ENCODE measurements at regions of chr13 and their contacts with region 1.

Region 1: DNA sequence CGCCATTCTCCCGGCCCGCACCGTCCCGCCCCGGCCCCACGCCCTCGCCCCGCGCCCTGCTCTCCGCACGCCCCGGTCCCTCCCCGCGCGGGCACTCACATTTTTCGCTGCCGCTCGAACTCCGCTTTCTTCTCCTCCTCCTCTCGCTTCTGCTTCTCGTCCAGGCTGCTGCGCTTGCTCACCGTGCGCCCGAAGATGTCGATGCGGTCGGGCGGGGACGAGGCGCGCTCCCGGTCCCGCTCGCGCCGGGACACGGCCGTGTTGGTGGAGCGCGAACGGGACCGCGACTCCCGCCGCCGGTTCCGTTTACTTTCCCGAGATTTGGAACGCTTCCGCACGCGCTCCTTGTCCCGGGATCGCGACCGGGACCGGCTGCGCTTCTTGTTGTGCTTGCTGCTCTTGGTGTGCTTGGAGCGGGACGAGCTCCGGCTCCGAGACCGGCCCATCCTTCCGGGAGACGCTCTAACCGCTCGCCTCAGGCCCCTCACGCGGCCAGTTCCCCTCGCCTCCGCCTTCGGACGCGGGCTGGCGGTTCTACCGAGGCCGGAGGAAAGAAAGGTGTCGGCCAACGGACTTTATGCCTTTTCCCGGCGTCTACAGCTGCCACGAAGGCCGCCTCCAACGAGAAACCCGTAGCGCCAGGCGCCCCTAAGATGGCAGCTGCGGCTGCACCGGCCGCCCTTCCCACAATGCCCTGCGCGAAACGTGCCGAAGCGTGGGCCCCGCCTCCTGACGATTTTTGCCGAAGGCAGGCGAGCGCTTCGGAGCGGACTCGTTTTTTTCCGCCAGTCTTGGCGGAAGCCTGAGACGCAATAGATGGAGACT is at the start of gene ARGLU1:
- DNase-seq: peak; percentile 90 to 96
- H3K4me3 ChIP-seq: peak within 1 kb of the TSS; percentile 84 to 97
- H3K27ac ChIP-seq: peak within 1 kb of the TSS; percentile 95 to 98
- H3K4me1 ChIP-seq: peaks cover 0 to 42% (median 27%) of the 10 kb centered on the region in 4 donors
- H3K27me3 ChIP-seq: no peaks in the 10 kb centered on the region
- CTCF ChIP-seq: no peak

Region 2: DNA sequence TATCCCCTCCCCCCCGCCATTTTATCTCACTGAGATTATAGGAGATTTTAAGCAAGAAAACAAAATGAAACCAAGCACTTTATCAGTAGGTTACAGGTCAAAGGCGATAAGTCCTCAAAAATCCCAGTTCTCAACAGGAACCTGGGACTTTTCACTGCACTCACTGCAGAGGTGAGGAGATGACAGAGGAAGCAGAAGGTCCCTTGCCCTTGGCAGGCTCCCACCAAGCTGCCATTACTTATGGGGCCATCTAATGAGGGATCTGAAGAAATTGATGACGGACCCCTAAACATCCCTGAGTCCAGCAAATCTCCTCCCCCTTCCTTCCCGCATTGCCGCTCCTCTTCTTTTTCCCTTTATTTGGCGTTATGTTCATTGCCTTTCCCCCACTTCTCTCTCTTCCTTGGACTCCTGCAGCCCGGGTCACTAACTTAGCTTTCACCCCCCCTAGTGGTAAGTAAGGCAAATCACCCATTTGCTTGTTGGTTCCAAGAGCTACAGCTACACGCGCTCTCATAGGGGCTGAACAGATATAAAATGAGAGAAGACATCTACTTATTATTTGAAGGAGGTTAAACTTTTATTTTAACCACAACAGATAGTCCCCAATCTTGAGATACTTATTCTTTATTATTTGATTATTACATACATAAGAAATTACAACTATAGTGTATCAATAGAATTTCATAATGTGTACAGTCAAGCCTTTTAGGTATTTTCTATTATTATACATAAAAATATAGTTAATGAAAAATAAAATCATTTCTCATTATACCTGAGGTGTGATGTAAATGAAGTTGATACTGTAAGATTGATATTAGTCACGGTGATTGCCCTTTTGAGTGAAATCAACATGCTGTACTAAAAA is 52.2 kb after region 1 on chr13:
- intact Hi-C with region 1: loop called (anchors 10 kb)
- DNase-seq: peak in 1 of 2 donors; percentile 25
- H3K4me3 ChIP-seq: no peak overlapping the region
- H3K27ac ChIP-seq: no peak overlapping the region
- H3K4me1 ChIP-seq: peaks cover 0 to 4% (median 2%) of the 10 kb centered on the region in 4 donors
- H3K27me3 ChIP-seq: peaks cover 0 to 13% of the 10 kb centered on the region in 2 donors
- CTCF ChIP-seq: peak; percentile 67 to 69

Region 3: GRCh38 chr13:106917673-106918556 is 350.2 kb after region 1 on chr13:
- intact Hi-C with region 1: loop called (anchors 5 kb)
- DNase-seq: peak; percentile 60 to 83
- H3K4me3 ChIP-seq: peak overlapping the region; percentile 67 to 79
- H3K27ac ChIP-seq: peak overlapping the region; percentile 84 to 89
- H3K4me1 ChIP-seq: peaks cover 0 to 34% (median 11%) of the 10 kb centered on the region in 4 donors
- H3K27me3 ChIP-seq: no peaks in the 10 kb centered on the region
- CTCF ChIP-seq: peak; percentile 88 to 96

Region 4: DNA sequence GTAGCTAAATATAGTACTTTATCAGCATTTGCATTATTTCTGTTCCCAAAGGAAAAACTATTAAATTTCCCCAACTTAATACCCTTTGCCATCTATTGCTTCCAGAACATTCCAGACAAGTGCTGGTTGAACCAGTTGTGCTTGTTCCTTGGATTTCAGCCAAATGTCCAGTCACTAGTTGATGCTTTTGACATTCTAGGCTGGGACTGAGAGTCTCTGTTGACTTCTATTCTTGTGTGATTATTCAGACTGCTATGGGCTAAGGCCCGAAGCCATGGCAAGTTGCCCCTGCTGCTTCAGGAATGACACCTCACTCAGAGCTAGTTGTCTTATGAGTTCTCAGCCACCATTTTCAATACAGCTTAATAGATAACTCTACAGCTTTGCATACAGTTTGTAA is 458.3 kb after region 1 on chr13:
- intact Hi-C with region 1: loop called (anchors 2 kb)
- DNase-seq: peak; percentile 90 to 92
- H3K4me3 ChIP-seq: no peak overlapping the region
- H3K27ac ChIP-seq: peak overlapping the region; percentile 67 to 77
- H3K4me1 ChIP-seq: peaks cover 0 to 31% (median 7%) of the 10 kb centered on the region in 4 donors
- H3K27me3 ChIP-seq: no peaks in the 10 kb centered on the region
- CTCF ChIP-seq: no peak

Region 5: GRCh38 chr13:108218044-108218974 is 1650.6 kb after region 1 on chr13 and contains the start of gene ABHD13:
- intact Hi-C with region 1: loop called (anchors 10 kb)
- DNase-seq: peak; percentile 82 to 94
- H3K4me3 ChIP-seq: peak within 1 kb of the TSS; percentile 93 to 96
- H3K27ac ChIP-seq: peak within 1 kb of the TSS; percentile 87 to 93
- H3K4me1 ChIP-seq: peaks cover 0 to 51% (median 23%) of the 10 kb centered on the region in 4 donors
- H3K27me3 ChIP-seq: no peaks in the 10 kb centered on the region
- CTCF ChIP-seq: peak in 1 of 2 experiments; percentile 10